Gastrocnemius medialis (tissue), 4 donors: ENCODE measurements at regions of chr7 and their contacts with region 1.

Region 1: DNA sequence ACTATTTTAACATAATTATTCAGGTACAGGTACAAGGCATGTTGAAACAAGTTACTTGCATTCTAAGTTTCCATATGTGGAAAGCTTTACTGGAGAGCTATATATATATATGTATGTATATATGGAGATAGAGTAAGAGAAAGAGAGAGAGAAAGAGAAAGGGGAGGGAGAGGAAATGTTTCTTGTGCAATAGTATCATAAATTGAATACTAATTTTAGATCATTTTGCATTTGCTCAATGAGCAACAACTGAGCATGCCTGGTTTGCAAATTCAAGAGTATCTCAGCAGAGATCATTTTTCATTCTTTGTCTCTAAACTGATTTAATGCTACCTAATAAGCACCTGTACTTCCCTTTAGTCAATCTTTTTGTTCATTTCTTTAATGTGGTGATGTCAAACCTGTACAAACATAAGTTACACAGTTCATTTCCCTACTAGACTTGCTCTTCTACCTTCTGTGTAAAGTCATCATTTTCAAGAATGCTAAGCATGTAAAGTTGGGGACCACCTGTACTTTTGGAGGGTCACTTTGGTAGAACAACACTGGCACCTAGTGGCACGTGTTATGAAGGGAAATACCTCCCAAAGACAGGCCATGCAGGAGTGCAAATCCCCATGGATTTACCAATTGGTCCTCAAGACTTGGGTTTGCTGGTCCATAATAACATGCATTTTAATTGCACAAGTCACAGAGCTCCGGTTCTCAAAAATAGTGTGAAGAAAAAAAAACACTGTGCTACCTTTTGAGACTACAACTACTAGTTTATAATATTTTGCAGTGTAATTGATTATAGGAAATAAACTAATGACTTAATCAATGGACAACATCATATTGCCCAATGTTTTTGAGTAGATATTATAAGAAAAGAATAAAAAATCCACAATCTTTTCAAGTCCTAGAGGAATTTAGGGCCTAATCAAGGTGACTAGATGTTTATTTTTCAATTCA is 431.2 kb upstream of the IGFBP3 start:
- DNase-seq: no peak
- ATAC-seq: no peak
- H3K4me3 ChIP-seq: no peak overlapping the region
- H3K27ac ChIP-seq: no peak overlapping the region
- H3K4me1 ChIP-seq: no peaks in the 10 kb centered on the region
- H3K27me3 ChIP-seq: no peaks in the 10 kb centered on the region
- CTCF ChIP-seq: peak in 3 of 5 experiments; percentile 26 to 29 (median 28)
- POLR2A ChIP-seq: no peak

Region 2: DNA sequence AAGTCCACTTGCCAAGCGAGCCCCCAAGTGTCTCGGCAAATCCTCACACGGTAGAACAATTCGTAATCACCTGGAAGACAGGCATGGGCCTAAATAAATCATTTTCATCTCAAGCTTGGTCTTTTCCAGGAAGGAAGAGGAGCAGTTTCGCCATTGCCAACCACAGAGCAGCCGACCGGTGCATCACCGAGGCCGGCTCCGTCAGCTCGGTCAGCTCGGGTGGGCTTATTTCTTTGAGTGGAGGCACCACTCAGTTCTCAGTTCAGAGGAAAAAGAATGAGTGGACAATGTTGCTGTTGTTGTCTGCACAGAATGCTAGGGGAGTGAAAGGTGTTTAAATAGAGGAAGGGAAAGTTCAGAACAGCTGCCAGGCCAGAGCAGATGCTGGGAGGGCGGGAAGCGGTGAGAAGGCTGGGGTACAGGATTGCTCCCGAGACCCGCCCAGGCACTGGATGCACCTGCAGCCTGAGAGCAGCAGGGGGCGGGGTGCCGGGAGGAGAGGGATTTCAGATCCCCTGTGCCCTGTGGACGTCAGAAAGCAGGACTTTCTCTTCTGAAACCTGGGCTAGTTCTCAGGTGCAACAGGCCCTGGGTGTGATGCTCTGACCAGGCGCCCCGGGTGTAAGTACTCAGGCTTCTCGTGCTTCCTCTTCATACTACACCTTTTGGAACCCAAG is 413.5 kb before region 1 on chr7:
- in situ Hi-C with region 1: loop called in 1 of 4 experiments (anchors 25 kb)
- intact Hi-C with region 1: no loop called
- DNase-seq: no peak
- ATAC-seq: no peak
- H3K4me3 ChIP-seq: no peak overlapping the region
- H3K27ac ChIP-seq: no peak overlapping the region
- H3K4me1 ChIP-seq: no peaks in the 10 kb centered on the region
- H3K27me3 ChIP-seq: no peaks in the 10 kb centered on the region
- CTCF ChIP-seq: no peak
- POLR2A ChIP-seq: no peak

Region 3: GRCh38 chr7:46315891-46316290 is 36.4 kb before region 1 on chr7:
- in situ Hi-C with region 1: no loop called
- intact Hi-C with region 1: no loop called
- DNase-seq: no peak
- ATAC-seq: no peak
- H3K4me3 ChIP-seq: no peak overlapping the region
- H3K27ac ChIP-seq: no peak overlapping the region
- H3K4me1 ChIP-seq: no peaks in the 10 kb centered on the region
- H3K27me3 ChIP-seq: no peaks in the 10 kb centered on the region
- CTCF ChIP-seq: no peak
- POLR2A ChIP-seq: no peak